Calu3 (cell line): ENCODE measurements at regions of chr4 and their contacts with region 1.

Region 1: GRCh38 chr4:82801910-82802521 is 3.4 kb upstream of the SCD5 start:
- DNase-seq: peak; percentile 37
- H3K4me3 Mint-ChIP-seq: no peak overlapping the region
- H3K27ac Mint-ChIP-seq: no peak overlapping the region
- H3K4me1 Mint-ChIP-seq: peaks cover 7% of the 10 kb centered on the region
- H3K27me3 Mint-ChIP-seq: no peaks in the 10 kb centered on the region
- CTCF ChIP-seq: no peak

Region 2: DNA sequence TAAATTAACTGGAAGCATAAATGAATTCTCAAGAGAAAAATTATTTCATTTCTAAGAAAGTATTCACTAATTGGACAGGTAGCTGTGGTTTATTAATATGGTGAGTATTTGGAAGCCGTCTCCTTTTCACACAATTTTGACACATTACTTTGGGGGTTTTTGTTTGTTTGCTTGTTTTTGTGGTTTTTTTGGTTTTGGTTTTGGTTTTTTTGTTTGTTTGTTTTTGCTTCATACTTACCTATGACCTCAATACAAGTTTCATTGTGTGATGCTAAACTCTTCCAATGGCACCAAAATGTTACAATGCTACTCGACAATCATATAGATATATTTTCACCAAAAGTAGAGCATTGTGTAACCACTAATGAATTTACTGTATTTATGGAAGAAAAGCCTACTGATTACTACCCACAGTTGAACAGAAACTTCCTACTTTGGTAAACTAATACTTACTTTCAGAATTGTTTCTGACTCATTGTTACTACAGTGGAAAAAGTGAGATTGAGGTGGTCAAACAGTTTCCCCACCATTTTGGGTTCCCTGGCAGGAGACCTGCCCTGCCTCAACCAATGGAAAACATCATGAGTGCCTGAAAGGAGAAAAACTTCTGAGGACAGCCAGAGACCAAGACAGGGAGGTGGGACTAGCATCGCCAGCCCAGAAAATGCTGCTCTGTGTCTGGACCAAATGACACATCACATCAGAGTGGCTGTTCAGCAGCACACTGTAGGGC is 871.3 kb before region 1 on chr4:
- CTCF ChIA-PET with region 1: no interaction called
- intact Hi-C with region 1: no loop called
- DNase-seq: no peak
- H3K4me3 Mint-ChIP-seq: no peak overlapping the region
- H3K27ac Mint-ChIP-seq: no peak overlapping the region
- H3K4me1 Mint-ChIP-seq: no peaks in the 10 kb centered on the region
- H3K27me3 Mint-ChIP-seq: no peaks in the 10 kb centered on the region
- CTCF ChIP-seq: no peak

Region 3: DNA sequence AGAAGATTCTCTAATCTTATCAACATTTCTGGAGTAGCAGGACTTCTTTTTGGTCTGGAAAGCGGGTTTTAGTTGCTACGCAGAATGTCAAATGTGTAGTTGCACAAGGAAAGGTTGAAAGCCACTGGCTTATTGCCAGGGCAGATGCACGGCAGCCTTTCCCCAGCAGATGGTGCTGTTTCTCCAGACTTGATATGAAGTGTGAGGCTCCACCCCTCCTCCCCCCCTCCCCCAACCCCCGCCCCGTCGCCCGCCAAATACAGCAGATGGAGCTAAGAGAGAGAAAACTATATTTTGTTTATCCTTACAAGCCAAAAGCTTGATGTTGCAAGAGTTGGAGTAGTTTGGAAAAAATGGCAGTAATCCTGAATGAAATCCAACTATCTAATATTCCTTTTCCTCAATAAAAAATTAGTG is 339.6 kb before region 1 on chr4:
- CTCF ChIA-PET with region 1: interaction called, 3 read pairs
- intact Hi-C with region 1: loop called (anchors 5 kb)
- DNase-seq: peak; percentile 79
- H3K4me3 Mint-ChIP-seq: no peak overlapping the region
- H3K27ac Mint-ChIP-seq: no peak overlapping the region
- H3K4me1 Mint-ChIP-seq: no peaks in the 10 kb centered on the region
- H3K27me3 Mint-ChIP-seq: no peaks in the 10 kb centered on the region
- CTCF ChIP-seq: peak; percentile 71

Region 4: DNA sequence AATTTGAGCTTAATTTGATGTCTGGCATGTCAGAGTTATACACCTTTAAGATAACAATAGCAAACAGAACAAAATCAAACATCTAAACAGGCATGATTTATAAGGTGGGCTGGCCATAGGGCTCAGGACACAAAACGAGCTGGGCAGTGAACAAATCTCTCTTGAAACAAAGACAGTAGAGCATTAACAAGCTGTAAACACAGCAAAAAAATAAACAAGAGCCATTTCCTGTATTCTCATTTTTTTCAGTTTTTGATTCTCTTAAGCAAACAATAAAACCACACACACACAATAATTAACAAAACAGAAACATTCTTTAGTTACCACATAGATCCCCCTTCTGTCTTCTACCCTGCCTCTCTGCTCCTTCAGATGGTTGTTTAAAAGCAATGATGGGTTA is 171.9 kb before region 1 on chr4:
- CTCF ChIA-PET with region 1: no interaction called
- intact Hi-C with region 1: loop called (anchors 5 kb)
- DNase-seq: no peak
- H3K4me3 Mint-ChIP-seq: peak overlapping the region; percentile 64
- H3K27ac Mint-ChIP-seq: peak overlapping the region; percentile 84
- H3K4me1 Mint-ChIP-seq: peaks cover 10% of the 10 kb centered on the region
- H3K27me3 Mint-ChIP-seq: no peaks in the 10 kb centered on the region
- CTCF ChIP-seq: no peak

Region 5: DNA sequence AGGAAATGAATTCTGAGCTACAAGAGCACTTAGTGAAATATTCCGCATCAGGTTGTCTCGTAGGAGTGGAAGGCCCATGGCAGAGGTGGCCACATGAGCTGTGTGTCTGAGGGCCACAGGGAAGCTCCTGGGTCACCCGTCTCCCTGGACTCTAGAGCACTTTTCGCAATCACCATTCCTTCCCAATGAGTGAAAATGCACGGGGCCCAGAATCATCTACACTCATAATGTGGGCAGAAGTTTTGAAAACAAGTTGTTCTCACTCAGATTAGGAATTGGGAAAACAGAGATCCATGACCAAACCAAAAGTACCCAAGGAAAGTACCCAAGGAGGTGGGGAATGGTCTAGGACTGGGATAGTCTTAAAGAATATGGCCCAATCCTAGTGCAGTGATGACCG is 97.9 kb before region 1 on chr4:
- CTCF ChIA-PET with region 1: no interaction called
- intact Hi-C with region 1: no loop called
- DNase-seq: no peak
- H3K4me3 Mint-ChIP-seq: no peak overlapping the region
- H3K27ac Mint-ChIP-seq: no peak overlapping the region
- H3K4me1 Mint-ChIP-seq: no peaks in the 10 kb centered on the region
- H3K27me3 Mint-ChIP-seq: no peaks in the 10 kb centered on the region
- CTCF ChIP-seq: no peak

Region 6: DNA sequence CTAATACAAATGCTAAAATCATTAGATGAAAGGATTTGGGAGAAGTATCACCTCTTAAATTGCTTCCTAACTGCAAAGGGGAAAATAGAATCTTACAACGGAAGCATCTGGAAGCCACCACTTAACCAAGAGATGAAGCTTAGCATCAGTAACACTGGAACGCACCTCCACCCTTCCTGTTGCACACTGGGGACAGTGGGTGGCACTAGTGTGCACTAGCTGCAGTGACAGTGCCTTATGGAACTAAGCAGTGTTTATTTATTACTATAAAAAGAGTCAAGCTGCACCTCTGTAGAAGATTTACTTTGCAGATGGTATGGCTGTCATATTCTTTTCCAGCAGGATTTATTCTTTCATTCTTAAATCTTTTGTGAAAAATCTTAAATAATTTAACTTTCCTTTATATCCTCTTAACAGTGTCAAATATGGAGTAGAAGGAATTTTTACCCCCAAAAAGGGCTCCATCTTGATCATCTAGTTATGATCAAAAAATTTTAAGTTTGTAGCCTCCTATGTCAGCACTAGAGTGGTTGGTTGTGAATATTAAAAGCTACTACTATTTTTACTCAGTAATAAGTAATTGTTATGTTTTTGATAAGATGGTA is 80.1 kb before region 1 on chr4:
- CTCF ChIA-PET with region 1: interaction called, 8 read pairs
- intact Hi-C with region 1: loop called (anchors 1 kb)
- DNase-seq: peak; percentile 58
- H3K4me3 Mint-ChIP-seq: no peak overlapping the region
- H3K27ac Mint-ChIP-seq: no peak overlapping the region
- H3K4me1 Mint-ChIP-seq: no peaks in the 10 kb centered on the region
- H3K27me3 Mint-ChIP-seq: no peaks in the 10 kb centered on the region
- CTCF ChIP-seq: no peak